IMR-90 (cell line): ENCODE measurements at regions of chr18 and their contacts with region 1.

Region 1: GRCh38 chr18:25345081-25345866 is 6.7 kb downstream of the ZNF521 start:
- DNase-seq: peak; percentile 5
- ATAC-seq: no peak
- H3K4me3 ChIP-seq: no peak overlapping the region
- H3K27ac ChIP-seq: no peak overlapping the region
- H3K4me1 ChIP-seq: peaks cover 4% of the 10 kb centered on the region; the same call in 1 of the 2 replicates
- H3K27me3 ChIP-seq: no peaks in the 10 kb centered on the region
- CTCF ChIP-seq: no peak
- POLR2A ChIP-seq: no peak
- RAD21 ChIP-seq: no peak

Region 2: DNA sequence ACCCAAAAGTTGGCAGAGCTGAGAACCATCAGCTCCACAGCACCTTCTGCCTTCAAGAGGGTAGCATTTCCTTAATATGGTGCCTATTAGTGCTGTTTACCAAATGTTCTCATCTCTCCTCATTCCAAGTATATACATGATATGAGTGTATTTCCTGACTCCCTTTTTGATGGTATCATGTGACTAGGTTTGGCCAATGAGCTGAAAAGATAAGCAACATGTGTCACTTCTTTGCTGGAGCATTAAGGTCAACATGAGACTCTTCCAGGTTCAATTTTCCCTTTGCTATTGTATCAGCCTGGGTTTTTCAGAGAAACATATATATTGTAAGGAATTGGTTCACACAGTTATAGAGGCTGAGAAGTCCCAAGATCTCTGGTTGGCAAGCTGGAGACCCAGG is 574.0 kb before region 1 on chr18:
- CTCF ChIA-PET with region 1: no interaction called
- POLR2A ChIA-PET with region 1: interaction called, 13 read pairs
- dilution Hi-C with region 1: no loop called
- in situ Hi-C with region 1: no loop called
- intact Hi-C with region 1: no loop called
- DNase-seq: peak; percentile 54
- ATAC-seq: no peak
- H3K4me3 ChIP-seq: no peak overlapping the region
- H3K27ac ChIP-seq: no peak overlapping the region
- H3K4me1 ChIP-seq: peaks cover 9% of the 10 kb centered on the region; the same call in 1 of the 2 replicates
- H3K27me3 ChIP-seq: no peaks in the 10 kb centered on the region
- CTCF ChIP-seq: no peak
- POLR2A ChIP-seq: no peak
- RAD21 ChIP-seq: no peak

Region 3: GRCh38 chr18:25033747-25034471 is 311.4 kb before region 1 on chr18:
- CTCF ChIA-PET with region 1: no interaction called
- POLR2A ChIA-PET with region 1: no interaction called
- dilution Hi-C with region 1: no loop called
- in situ Hi-C with region 1: no loop called
- intact Hi-C with region 1: no loop called
- DNase-seq: no peak
- ATAC-seq: no peak
- H3K4me3 ChIP-seq: no peak overlapping the region
- H3K27ac ChIP-seq: no peak overlapping the region
- H3K4me1 ChIP-seq: no peaks in the 10 kb centered on the region
- H3K27me3 ChIP-seq: peaks cover 17% of the 10 kb centered on the region
- CTCF ChIP-seq: no peak
- POLR2A ChIP-seq: no peak
- RAD21 ChIP-seq: no peak

Region 4: GRCh38 chr18:25164848-25165811 is 180.1 kb before region 1 on chr18:
- CTCF ChIA-PET with region 1: no interaction called
- POLR2A ChIA-PET with region 1: no interaction called
- dilution Hi-C with region 1: no loop called
- in situ Hi-C with region 1: no loop called
- intact Hi-C with region 1: loop called (anchors 1 kb)
- DNase-seq: peak; percentile 84
- ATAC-seq: peak; percentile 83
- H3K4me3 ChIP-seq: peak overlapping the region; percentile 29; the same call in 1 of the 2 replicates
- H3K27ac ChIP-seq: peak overlapping the region; percentile 92
- H3K4me1 ChIP-seq: peaks cover 16% of the 10 kb centered on the region
- H3K27me3 ChIP-seq: no peaks in the 10 kb centered on the region
- CTCF ChIP-seq: no peak
- POLR2A ChIP-seq: no peak
- RAD21 ChIP-seq: no peak

Region 5: DNA sequence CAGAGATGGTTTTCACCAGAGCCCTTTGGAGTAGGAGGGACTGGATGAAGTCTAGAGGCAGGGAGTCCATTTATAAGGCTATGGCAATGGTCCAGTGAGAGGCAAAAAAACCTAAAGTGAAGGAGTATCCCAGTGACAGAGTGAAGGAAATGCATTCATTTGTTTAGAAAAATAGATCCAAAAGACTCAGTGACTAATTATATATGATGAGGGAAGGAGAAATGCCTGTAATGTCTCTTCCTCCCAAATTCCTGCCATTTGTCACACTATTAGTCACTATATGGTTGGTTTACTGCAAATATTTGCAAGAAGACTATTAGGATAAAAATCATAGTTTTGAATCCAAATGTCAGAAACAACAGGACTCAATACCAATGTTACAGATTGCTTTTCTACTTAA is 97.5 kb before region 1 on chr18:
- CTCF ChIA-PET with region 1: no interaction called
- POLR2A ChIA-PET with region 1: no interaction called
- dilution Hi-C with region 1: no loop called
- in situ Hi-C with region 1: no loop called
- intact Hi-C with region 1: no loop called
- DNase-seq: peak; percentile 77
- ATAC-seq: peak; percentile 72
- H3K4me3 ChIP-seq: no peak overlapping the region
- H3K27ac ChIP-seq: peak overlapping the region; percentile 56
- H3K4me1 ChIP-seq: peaks cover 18% of the 10 kb centered on the region
- H3K27me3 ChIP-seq: no peaks in the 10 kb centered on the region
- CTCF ChIP-seq: no peak
- POLR2A ChIP-seq: no peak
- RAD21 ChIP-seq: no peak

Region 6: GRCh38 chr18:25275412-25276001 is 69.8 kb before region 1 on chr18:
- CTCF ChIA-PET with region 1: no interaction called
- POLR2A ChIA-PET with region 1: no interaction called
- dilution Hi-C with region 1: no loop called
- in situ Hi-C with region 1: no loop called
- intact Hi-C with region 1: no loop called
- DNase-seq: no peak
- ATAC-seq: no peak
- H3K4me3 ChIP-seq: no peak overlapping the region
- H3K27ac ChIP-seq: no peak overlapping the region
- H3K4me1 ChIP-seq: peaks cover 6% of the 10 kb centered on the region
- H3K27me3 ChIP-seq: no peaks in the 10 kb centered on the region
- CTCF ChIP-seq: no peak
- POLR2A ChIP-seq: no peak
- RAD21 ChIP-seq: no peak

Region 7: GRCh38 chr18:25464227-25464626 is 119.0 kb after region 1 on chr18:
- CTCF ChIA-PET with region 1: interaction called, 10 read pairs
- POLR2A ChIA-PET with region 1: no interaction called
- dilution Hi-C with region 1: no loop called
- in situ Hi-C with region 1: no loop called
- intact Hi-C with region 1: loop called (anchors 5 kb)
- DNase-seq: peak; percentile 95
- ATAC-seq: peak; percentile 88
- H3K4me3 ChIP-seq: no peak overlapping the region
- H3K27ac ChIP-seq: peak overlapping the region; percentile 92
- H3K4me1 ChIP-seq: peaks cover 35% of the 10 kb centered on the region
- H3K27me3 ChIP-seq: no peaks in the 10 kb centered on the region
- CTCF ChIP-seq: no peak
- POLR2A ChIP-seq: no peak
- RAD21 ChIP-seq: no peak

Region 8: GRCh38 chr18:26414901-26415440 is 1069.7 kb after region 1 on chr18:
- CTCF ChIA-PET with region 1: no interaction called
- POLR2A ChIA-PET with region 1: no interaction called
- dilution Hi-C with region 1: no loop called
- in situ Hi-C with region 1: no loop called
- intact Hi-C with region 1: no loop called
- DNase-seq: no peak
- ATAC-seq: no peak
- H3K4me3 ChIP-seq: no peak overlapping the region
- H3K27ac ChIP-seq: no peak overlapping the region
- H3K4me1 ChIP-seq: no peaks in the 10 kb centered on the region
- H3K27me3 ChIP-seq: peaks cover 2% of the 10 kb centered on the region
- CTCF ChIP-seq: no peak
- POLR2A ChIP-seq: no peak
- RAD21 ChIP-seq: no peak